ENCODE measurements at regions of chr14 and their contacts with region 1.

Region 1: GRCh38 chr14:69726761-69727511 is 40.0 kb upstream of the SRSF5 start:
- DNase-seq: peak; percentile 71 to 82 (median 80)
- H3K4me3 ChIP-seq: peak overlapping the region in 5 of 7 experiments; percentile 21 to 70 (median 51)
- H3K27ac ChIP-seq: no peak overlapping the region
- H3K4me1 ChIP-seq: peaks cover 0 to 15% (median 9%) of the 10 kb centered on the region in 4 experiments
- H3K27me3 ChIP-seq: no peaks in the 10 kb centered on the region

Region 2: DNA sequence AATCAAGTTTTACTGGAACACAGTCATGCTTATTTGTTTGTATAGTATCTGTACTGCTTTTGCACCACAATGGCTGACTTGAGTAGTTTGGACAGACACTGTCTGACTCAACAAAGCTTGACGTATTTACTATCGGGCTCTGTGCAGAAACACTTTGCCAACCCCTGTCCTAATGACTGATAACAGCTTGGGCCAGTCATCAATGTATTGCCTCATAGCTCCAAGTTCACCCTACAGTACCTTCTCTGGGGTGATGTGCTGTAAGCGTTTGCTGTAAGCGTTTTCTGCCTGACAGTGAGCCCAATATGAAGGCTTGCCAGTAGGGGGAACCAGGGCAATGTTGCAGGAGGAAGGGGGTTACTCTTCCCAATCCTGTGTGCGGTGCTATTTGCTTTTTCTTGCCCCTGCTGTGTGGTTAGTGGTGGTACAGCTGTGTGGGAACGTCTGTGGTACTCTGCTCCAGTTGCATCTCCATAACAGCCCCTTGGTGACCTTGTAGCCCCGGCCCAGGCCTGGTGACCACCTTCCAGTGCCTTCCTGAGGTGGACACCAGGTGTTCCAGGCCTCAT is 146.8 kb before region 1 on chr14:
- CTCF ChIA-PET with region 1: interaction called, 17 read pairs
- POLR2A ChIA-PET with region 1: interaction called, 4 read pairs
- DNase-seq: peak; percentile 62 to 78 (median 72)
- H3K4me3 ChIP-seq: no peak overlapping the region
- H3K27ac ChIP-seq: no peak overlapping the region
- H3K4me1 ChIP-seq: no peaks in the 10 kb centered on the region
- H3K27me3 ChIP-seq: peaks cover 0 to 22% (median 17%) of the 10 kb centered on the region in 5 experiments

Region 3: DNA sequence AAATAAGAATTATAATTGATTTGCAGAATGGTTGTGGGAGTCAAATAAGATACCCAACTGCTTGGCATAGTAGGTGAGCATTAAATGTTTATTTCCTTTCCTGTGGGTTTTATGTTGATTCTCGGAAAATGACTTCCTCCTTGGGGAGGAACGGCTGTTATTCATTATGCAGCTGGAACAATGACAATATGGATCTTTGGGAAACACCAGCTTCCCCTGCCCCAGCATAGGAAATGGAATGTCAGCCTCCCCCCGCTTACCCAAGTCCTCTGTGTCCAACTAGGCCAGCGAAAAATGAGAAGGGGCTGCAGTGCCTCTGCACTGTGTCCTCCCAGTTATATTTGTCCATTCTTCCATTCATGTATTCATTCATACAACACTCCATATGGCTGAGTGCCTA is 140.5 kb before region 1 on chr14:
- CTCF ChIA-PET with region 1: interaction called, 17 read pairs
- POLR2A ChIA-PET with region 1: interaction called, 4 read pairs
- DNase-seq: no peak
- H3K4me3 ChIP-seq: no peak overlapping the region
- H3K27ac ChIP-seq: no peak overlapping the region
- H3K4me1 ChIP-seq: peaks cover 0 to 6% (median 0%) of the 10 kb centered on the region in 4 experiments
- H3K27me3 ChIP-seq: peaks cover 0 to 3% (median 0%) of the 10 kb centered on the region in 5 experiments

Region 4: GRCh38 chr14:69600304-69600891 is 126.5 kb before region 1 on chr14:
- CTCF ChIA-PET with region 1: interaction called, 83 read pairs
- POLR2A ChIA-PET with region 1: no interaction called
- DNase-seq: no peak
- H3K4me3 ChIP-seq: no peak overlapping the region
- H3K27ac ChIP-seq: no peak overlapping the region
- H3K4me1 ChIP-seq: no peaks in the 10 kb centered on the region
- H3K27me3 ChIP-seq: no peaks in the 10 kb centered on the region

Region 5: GRCh38 chr14:69611201-69612011 is 115.5 kb before region 1 on chr14 and contains the start of gene SUSD6:
- CTCF ChIA-PET with region 1: interaction called, 83 read pairs
- POLR2A ChIA-PET with region 1: interaction called, 3 read pairs
- DNase-seq: peak; percentile 82 to 92 (median 92)
- H3K4me3 ChIP-seq: peak within 1 kb of the TSS; percentile 45 to 87 (median 76)
- H3K27ac ChIP-seq: peak within 1 kb of the TSS; percentile 78 to 90
- H3K4me1 ChIP-seq: peaks cover 30 to 58% (median 56%) of the 10 kb centered on the region in 4 experiments
- H3K27me3 ChIP-seq: no peaks in the 10 kb centered on the region

Region 6: DNA sequence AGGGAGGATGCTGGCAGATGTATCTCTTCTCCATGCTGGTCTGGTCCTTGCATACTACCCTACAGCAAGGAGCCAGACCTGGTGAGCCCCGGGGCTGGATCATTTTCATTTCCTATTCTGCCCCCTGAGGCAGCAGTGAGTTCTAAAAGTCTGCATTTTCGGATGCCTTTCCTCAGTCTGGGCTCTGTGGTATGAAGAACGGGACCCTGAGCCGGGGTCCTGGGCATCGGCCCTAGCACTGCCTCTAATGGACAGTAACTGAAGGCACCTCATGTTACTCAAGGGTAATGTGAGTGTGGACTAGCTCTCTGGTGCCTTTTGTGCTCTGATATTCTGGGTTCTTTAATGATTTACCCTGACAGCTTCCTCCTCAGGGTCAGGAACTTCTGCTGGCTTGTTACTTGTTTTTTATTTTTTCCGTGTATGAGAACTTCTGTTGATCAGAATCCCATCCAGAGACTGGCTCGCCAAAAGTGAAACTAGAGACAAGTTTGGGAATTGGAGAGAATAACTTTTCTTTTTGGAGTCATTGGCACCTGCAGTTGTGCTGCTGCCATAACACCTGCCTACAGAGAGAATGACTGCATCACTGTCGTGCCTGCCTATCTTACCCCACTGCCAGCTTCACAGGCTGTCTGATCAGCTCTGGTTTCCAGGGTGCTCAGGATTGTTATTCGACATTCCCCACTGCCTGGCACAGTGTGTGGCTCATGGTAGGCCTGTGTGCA is 53.2 kb before region 1 on chr14:
- CTCF ChIA-PET with region 1: interaction called, 22 read pairs
- POLR2A ChIA-PET with region 1: interaction called, 3 read pairs
- DNase-seq: peak; percentile 38 to 75 (median 66)
- H3K4me3 ChIP-seq: peak overlapping the region in 5 of 7 experiments; percentile 2 to 57 (median 31)
- H3K27ac ChIP-seq: peak overlapping the region in 1 of 2 experiments; percentile 72
- H3K4me1 ChIP-seq: peaks cover 12 to 43% (median 41%) of the 10 kb centered on the region in 4 experiments
- H3K27me3 ChIP-seq: no peaks in the 10 kb centered on the region

Measured in common myeloid progenitor, CD34-positive (primary cell).